Posterior vena cava (tissue), 2 donors: ENCODE measurements at regions of chr12 and their contacts with region 1.

Region 1: DNA sequence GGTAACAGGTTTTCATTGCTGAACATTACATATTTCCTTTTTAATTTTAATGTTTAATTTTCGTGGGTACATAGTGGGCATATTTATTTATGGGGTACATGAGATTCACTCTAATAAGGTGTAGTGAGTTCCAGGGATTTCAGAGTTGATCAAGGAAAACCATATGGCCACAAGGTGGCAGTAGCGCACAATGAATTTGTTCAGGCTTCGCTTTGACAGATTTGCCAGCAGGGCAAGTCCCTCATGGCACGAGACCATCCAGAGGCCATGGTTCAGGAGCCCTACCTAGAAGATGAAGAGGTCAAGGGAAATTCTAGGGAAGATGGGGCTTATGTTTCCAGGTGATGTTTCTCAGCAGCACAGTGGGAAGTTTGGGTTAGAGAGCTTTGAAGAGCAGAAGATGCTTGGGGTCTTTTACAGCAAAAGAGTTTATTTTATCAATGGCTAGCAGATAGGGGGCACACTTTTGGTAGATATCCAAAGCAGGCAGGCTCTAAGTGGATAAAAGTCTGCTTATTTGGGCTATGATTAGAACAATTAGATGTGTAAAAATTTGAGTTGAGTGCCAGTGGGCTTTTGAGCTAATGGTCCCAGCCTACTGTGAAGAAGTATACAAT is 1004.4 kb downstream of the AACS start:
- DNase-seq: no peak

Region 2: GRCh38 chr12:125487336-125487735 is 582.3 kb before region 1 on chr12:
- intact Hi-C with region 1: no loop called
- DNase-seq: no peak

Region 3: DNA sequence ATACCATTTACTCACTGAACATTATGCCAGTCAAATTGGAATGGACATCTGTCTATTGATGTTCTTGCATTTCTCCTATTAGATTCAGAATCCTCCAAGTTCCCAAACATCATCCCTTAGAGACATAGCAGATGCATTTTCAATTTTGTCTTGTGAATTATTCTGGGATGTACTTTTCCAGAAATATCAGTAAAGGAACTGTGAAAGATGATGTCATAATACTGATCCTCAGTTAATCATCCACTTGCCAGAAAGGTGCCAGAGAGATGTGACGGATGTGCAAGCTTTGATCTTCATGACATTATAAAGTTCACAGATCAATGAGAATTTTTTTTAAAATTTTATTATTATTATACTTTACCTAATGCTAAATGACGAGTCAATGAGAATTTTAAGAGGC is 237.3 kb before region 1 on chr12:
- intact Hi-C with region 1: no loop called
- DNase-seq: no peak

Region 4: GRCh38 chr12:126295652-126296051 is 226.0 kb after region 1 on chr12:
- intact Hi-C with region 1: no loop called
- DNase-seq: no peak

Region 5: DNA sequence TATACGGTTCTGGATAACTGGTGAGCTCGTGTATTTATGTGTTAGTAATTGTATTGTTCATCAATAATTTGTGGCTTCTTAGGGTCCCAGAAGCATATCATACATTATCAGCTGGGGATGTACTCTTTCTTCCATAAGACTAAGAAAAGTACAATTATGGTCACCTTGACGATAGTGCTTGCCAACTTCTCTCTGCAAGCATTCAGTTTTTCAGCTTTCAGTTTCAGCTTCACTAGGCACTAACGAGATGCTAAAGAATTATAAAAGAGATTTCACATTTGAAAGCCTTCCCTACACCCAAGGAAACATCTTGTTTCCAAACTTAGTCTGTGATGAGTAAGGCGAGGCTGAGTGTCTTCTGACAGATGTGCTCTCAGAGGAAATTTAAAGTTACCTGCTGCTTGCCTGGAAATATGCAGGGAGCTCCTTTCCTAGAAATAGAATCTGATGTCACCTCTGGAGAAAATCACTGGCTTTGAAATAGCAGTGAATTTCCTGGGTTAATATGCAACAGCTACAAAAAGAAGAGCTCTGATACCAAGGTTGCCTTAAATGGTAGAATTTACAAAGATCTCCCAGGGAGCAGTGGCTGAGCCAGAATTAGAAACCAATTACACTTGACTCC is 777.5 kb after region 1 on chr12:
- intact Hi-C with region 1: loop called in 1 of 2 experiments (anchors 10 kb)
- DNase-seq: no peak